SK-N-SH (cell line): ENCODE measurements at regions of chr9 and their contacts with region 1.

Region 1: DNA sequence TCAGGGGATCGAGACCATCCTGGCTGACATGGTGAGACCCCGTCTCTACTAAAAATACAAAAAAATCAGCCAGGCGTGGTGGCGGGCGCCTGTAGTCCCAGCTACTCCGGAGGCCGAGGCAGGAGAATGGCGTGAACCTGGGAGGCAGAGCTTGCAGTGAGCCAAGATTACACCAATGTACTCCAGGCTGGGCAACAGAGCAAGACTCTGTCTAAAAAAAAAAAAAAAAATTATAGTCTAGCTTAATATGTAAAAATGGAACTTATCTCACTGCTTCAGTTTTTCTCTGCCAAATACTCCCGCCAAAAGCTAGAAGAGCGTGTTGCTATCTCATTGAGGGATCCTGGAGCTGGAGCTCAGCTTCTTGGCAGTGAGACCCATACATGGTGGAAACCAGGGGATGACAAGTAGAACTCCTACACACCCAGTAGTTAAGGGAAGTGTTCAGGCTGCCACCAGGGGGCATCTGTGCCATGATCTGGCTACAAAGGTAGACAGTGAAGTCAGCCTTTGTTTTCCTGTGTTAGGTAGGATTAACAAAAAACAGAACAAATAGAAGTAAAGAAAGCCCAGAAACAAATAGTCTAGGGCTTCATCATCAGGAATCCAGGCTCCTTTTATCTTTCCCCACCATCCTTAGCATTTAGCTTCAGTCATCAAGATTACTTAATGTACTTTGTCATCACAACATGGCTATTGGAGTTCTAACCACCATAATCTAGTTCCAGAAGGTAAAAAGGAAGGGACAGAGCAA is 33.6 kb upstream of the GLIPR2 start:
- DNase-seq: peak; percentile 74
- H3K4me3 ChIP-seq: no peak overlapping the region
- H3K27ac ChIP-seq: peak overlapping the region; percentile 73 to 90; a peak in 3 of 4 replicates
- H3K4me1 ChIP-seq: peaks cover 0 to 32% of the 10 kb centered on the region in 2 experiments; a peak in 3 of 4 replicates
- H3K27me3 ChIP-seq: no peaks in the 10 kb centered on the region
- CTCF ChIP-seq: peak; percentile 84
- EP300 ChIP-seq: no peak
- RAD21 ChIP-seq: peak; percentile 88

Region 2: GRCh38 chr9:35664531-35665470 is 438.1 kb before region 1 on chr9 and contains the start of gene ARHGEF39:
- CTCF ChIA-PET with region 1: no interaction called
- POLR2A ChIA-PET with region 1: no interaction called
- DNase-seq: peak; percentile 98
- H3K4me3 ChIP-seq: peak within 1 kb of the TSS; percentile 61 to 65
- H3K27ac ChIP-seq: peak within 1 kb of the TSS; percentile 53 to 80
- H3K4me1 ChIP-seq: peaks cover 0 to 12% of the 10 kb centered on the region in 2 experiments; a peak in 1 of 4 replicates
- H3K27me3 ChIP-seq: no peaks in the 10 kb centered on the region
- CTCF ChIP-seq: peak; percentile 55
- EP300 ChIP-seq: peak in 1 of 2 experiments; percentile 53; a peak in 2 of 4 replicates
- RAD21 ChIP-seq: no peak; the same call in 1 of the 2 replicates
- polyA plus RNA-seq, gene ARHGEF39: 4.9 and 5.2 TPM in 2 replicates

Region 3: DNA sequence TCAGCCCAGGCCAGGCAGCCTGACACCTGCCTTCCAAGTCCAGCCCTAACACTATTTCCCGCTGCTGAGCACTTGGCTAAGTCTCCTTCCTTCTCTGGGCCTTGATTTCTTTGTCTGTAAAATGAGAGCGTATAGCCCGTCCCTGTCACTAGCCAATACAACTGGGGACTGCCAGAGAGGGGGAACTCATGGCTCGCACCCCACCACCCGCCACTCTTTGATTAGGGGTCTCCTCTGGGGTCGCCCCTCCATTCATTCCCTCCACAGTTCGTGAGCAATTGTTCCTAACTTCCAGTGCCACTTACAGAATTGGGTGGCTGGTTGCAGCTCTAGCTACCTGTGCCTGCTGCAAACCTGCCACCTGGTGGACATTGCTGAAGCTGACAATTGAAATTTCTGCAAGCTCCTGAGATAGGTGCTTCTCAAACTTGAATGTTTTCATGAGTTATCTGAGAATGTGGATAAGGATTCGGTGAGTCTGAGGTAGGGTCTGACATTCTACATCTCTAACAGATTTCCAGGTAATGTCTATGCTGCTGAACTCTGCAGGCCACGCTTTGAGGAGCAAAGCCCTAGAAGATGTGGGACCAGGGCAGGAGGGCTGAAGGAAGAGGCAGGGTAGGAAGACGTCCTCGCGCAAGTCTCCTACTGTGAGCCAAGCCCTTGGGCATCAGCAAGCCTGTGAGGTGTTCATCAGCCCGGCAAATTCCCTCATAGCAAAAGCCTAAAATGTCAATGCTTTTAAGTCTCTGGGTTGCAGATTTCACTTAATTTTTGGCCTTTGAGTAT is 79.5 kb before region 1 on chr9:
- CTCF ChIA-PET with region 1: interaction called, 11 read pairs
- POLR2A ChIA-PET with region 1: no interaction called
- DNase-seq: peak; percentile 68
- H3K4me3 ChIP-seq: no peak overlapping the region
- H3K27ac ChIP-seq: no peak overlapping the region
- H3K4me1 ChIP-seq: peaks cover 0 to 7% of the 10 kb centered on the region in 2 experiments; a peak in 2 of 4 replicates
- H3K27me3 ChIP-seq: no peaks in the 10 kb centered on the region
- CTCF ChIP-seq: peak; percentile 93
- EP300 ChIP-seq: no peak
- RAD21 ChIP-seq: peak; percentile 88

Region 4: GRCh38 chr9:36074870-36075532 is 27.9 kb before region 1 on chr9:
- CTCF ChIA-PET with region 1: interaction called, 14 read pairs
- POLR2A ChIA-PET with region 1: no interaction called
- DNase-seq: peak; percentile 30
- H3K4me3 ChIP-seq: no peak overlapping the region
- H3K27ac ChIP-seq: peak overlapping the region; percentile 53 to 85; a peak in 3 of 4 replicates
- H3K4me1 ChIP-seq: peaks cover 12 to 21% of the 10 kb centered on the region in 2 experiments
- H3K27me3 ChIP-seq: no peaks in the 10 kb centered on the region
- CTCF ChIP-seq: no peak
- EP300 ChIP-seq: no peak
- RAD21 ChIP-seq: no peak

Region 5: DNA sequence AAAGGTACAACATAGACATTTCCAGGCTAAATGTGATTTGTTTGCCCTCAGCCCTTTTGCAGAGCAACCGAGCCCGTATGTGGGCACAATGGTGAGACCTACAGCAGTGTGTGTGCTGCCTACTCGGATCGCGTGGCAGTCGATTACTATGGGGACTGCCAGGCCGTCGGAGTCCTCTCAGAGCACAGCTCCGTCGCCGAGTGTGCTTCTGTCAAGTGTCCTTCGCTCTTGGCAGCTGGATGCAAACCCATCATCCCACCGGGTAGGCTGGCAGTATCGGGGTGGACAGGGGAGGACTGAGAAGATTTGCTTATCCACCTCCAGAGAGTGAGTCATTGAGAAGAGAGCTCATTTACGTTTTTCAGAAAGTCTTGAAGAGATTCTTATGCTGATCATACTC is 15.8 kb after region 1 on chr9:
- CTCF ChIA-PET with region 1: interaction called, 76 read pairs
- POLR2A ChIA-PET with region 1: no interaction called
- DNase-seq: no peak
- H3K4me3 ChIP-seq: no peak overlapping the region
- H3K27ac ChIP-seq: no peak overlapping the region
- H3K4me1 ChIP-seq: no peaks in the 10 kb centered on the region; a peak in 1 of 4 replicates
- H3K27me3 ChIP-seq: no peaks in the 10 kb centered on the region
- CTCF ChIP-seq: no peak
- EP300 ChIP-seq: no peak
- RAD21 ChIP-seq: no peak

Region 6: DNA sequence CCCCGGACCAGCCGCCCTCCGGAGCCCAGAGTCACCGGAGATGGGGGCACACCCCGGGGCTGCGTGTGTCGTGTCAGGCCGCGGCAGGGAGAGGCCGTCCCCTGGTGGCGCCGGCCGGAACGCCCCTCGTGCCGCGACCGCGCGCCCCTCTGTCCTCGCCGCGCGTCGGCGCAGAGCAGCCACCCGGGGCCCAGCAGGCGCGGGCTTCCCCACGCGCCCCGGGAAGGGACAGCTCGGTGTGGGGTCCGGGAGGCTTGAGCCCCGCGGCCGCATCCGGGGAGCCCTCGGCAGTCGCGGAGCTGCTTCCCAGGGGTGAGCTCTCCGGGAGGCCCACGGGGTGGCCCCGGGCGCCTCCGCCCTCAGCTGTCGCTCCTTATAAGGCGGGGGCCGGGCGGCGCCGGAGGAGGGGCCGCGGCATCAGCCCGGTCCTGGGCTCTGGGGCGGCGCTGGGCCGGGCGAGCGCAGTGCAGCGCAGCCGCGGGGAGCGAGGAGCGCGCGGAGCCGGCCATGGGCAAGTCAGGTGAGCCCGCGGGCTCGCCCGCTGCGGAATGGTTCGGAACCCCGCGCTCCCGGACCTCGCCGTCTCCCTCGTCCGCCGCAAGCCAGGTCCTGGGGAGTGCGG is 33.5 kb after region 1 on chr9 and contains the start of gene GLIPR2:
- CTCF ChIA-PET with region 1: interaction called, 27 read pairs
- POLR2A ChIA-PET with region 1: no interaction called
- DNase-seq: peak; percentile 92
- H3K4me3 ChIP-seq: peak within 1 kb of the TSS; percentile 67 to 83
- H3K27ac ChIP-seq: no peak within 1 kb of the TSS; a peak in 1 of 4 replicates
- H3K4me1 ChIP-seq: peaks cover 0 to 21% of the 10 kb centered on the region in 2 experiments; a peak in 3 of 4 replicates
- H3K27me3 ChIP-seq: no peaks in the 10 kb centered on the region
- CTCF ChIP-seq: peak; percentile 40
- EP300 ChIP-seq: no peak
- RAD21 ChIP-seq: no peak; the same call in 1 of the 2 replicates
- polyA plus RNA-seq, gene GLIPR2: 38.3 and 40.1 TPM in 2 replicates

Region 7: DNA sequence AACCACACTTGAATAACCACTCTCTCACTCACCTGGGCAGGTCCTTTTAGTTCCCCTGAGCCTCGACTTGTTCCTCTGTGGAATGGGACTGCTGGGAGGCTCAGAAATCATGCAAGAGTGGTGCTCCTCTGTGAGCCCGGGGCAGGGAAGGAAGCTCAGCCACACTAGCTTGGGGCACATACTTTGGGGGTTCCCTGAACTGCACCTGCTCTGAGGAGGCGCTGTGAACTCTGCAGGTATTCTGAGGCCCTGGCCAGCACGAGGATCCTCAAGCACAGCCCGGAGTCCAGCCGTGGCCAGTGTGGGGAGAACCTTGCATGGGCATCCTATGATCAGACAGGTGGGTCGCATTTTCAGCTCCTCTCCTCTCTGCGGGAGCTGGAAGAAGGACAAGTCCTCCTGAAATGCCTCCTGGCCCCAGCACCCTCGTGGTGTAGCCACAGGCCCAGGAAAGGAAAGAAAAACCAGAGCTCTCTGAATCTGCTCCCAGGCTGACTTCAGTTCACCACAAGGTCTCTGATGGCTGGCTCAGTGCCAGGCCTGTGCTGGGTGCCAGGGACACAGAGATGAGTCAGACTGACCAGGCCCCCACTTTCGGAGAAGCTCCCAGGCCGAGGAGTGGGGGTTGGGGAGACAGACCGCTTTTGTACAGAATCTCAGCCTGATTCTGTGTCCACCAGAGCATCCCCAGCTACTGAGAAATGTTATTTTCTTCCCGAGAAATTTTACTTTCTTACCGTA is 45.6 kb after region 1 on chr9:
- CTCF ChIA-PET with region 1: interaction called, 12 read pairs
- POLR2A ChIA-PET with region 1: no interaction called
- DNase-seq: peak; percentile 94
- H3K4me3 ChIP-seq: peak overlapping the region in 1 of 2 experiments; percentile 6; a peak in 1 of 4 replicates
- H3K27ac ChIP-seq: peak overlapping the region; percentile 89 to 98
- H3K4me1 ChIP-seq: peaks cover 15 to 41% of the 10 kb centered on the region in 2 experiments; a peak in 3 of 4 replicates
- H3K27me3 ChIP-seq: no peaks in the 10 kb centered on the region
- CTCF ChIP-seq: no peak
- EP300 ChIP-seq: peak; percentile 72 to 87
- RAD21 ChIP-seq: peak; percentile 44

Region 8: DNA sequence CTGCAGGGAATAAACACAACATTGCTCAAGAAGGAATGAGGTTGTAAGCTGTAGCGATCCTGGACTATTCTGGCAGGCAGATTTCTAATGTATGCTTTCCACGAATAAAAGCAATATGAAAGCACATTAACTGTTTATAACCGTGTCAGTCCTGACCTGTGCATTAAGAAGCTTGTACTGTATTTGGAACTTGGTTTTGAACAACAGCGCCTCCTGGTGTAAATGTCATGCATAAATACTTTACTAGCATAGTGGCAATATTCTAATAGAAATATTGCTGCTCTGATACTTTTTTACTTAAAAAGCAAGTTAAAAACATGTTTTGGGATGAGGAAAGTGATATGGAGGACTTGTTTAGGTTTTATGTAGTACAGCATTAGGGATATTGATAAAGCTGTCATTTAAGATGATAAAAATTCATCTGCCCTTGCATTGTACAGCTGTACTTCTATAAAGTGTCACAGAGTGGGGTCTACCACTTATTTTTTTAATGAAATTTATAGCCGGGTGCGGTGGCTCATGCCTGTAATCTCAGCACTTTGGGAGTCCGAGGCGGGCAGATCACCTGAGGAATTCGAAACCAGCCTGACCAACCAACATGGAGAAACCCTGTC is 226.0 kb after region 1 on chr9:
- CTCF ChIA-PET with region 1: interaction called, 15 read pairs
- POLR2A ChIA-PET with region 1: no interaction called
- DNase-seq: peak; percentile 62
- H3K4me3 ChIP-seq: peak overlapping the region in 1 of 2 experiments; percentile 4; a peak in 1 of 4 replicates
- H3K27ac ChIP-seq: no peak overlapping the region
- H3K4me1 ChIP-seq: no peaks in the 10 kb centered on the region; a peak in 2 of 4 replicates
- H3K27me3 ChIP-seq: no peaks in the 10 kb centered on the region
- CTCF ChIP-seq: peak; percentile 86
- EP300 ChIP-seq: no peak
- RAD21 ChIP-seq: peak; percentile 85